Activated CD8-positive, alpha-beta T cell treated with anti-CD3 and anti-CD28 coated beads for 36 hours (primary cell): ENCODE measurements at regions of chr2 and their contacts with region 1.

Region 1: GRCh38 chr2:177263451-177264208 is 897 bp downstream of the NFE2L2 start:
- DNase-seq: peak; percentile 96
- ATAC-seq: peak; percentile 63
- H3K4me3 Mint-ChIP-seq: peak overlapping the region; percentile 90
- H3K27ac Mint-ChIP-seq: peak overlapping the region; percentile 96
- H3K4me1 Mint-ChIP-seq: peaks cover 54% of the 10 kb centered on the region
- H3K27me3 Mint-ChIP-seq: no peaks in the 10 kb centered on the region
- CTCF ChIP-seq: peak; percentile 81

Region 2: GRCh38 chr2:177221534-177221933 is 42.1 kb before region 1 on chr2:
- CTCF ChIA-PET with region 1: interaction called, 12 read pairs
- POLR2A ChIA-PET with region 1: interaction called, 31 read pairs
- intact Hi-C with region 1: loop called (anchors 5 kb)
- DNase-seq: no peak
- ATAC-seq: no peak
- H3K4me3 Mint-ChIP-seq: no peak overlapping the region
- H3K27ac Mint-ChIP-seq: peak overlapping the region; percentile 1
- H3K4me1 Mint-ChIP-seq: peaks cover 40% of the 10 kb centered on the region
- H3K27me3 Mint-ChIP-seq: no peaks in the 10 kb centered on the region
- CTCF ChIP-seq: no peak

Region 3: DNA sequence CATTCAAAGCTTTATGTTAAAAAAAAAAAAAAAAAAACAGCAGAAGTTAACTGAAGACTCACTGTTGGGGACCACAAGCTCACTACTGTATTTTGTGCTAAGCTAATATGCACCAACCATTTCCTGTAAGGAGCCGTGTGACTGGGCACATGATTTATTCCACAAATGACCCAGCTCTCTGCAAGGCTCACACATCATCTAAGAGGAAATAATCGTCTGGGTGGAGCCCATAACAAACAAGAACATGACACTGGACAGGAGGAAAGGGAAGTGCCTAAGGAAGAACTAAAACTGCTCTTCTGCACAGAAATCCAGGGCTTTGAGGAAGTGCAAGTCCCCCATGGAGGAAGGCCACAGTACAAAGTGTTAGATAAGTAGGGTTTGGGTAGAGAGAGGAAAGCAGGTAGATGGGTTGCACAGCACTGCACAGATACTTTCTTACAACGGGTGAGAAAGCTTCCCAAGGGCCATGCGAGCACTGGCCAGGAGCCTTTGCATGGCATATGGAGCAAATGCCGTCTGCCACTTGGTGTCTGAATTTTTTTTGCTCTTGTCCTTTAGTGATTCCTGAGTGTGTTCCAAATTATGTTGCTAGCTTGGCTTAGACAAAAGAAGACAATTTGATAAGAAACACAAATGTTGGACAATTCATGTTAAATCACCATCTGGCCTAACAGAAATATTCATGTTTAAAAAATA is 23.5 kb before region 1 on chr2:
- CTCF ChIA-PET with region 1: interaction called, 33 read pairs
- POLR2A ChIA-PET with region 1: interaction called, 63 read pairs
- intact Hi-C with region 1: no loop called
- DNase-seq: peak; percentile 54
- ATAC-seq: peak; percentile 87
- H3K4me3 Mint-ChIP-seq: no peak overlapping the region
- H3K27ac Mint-ChIP-seq: peak overlapping the region; percentile 87
- H3K4me1 Mint-ChIP-seq: peaks cover 70% of the 10 kb centered on the region
- H3K27me3 Mint-ChIP-seq: no peaks in the 10 kb centered on the region
- CTCF ChIP-seq: no peak

Region 4: DNA sequence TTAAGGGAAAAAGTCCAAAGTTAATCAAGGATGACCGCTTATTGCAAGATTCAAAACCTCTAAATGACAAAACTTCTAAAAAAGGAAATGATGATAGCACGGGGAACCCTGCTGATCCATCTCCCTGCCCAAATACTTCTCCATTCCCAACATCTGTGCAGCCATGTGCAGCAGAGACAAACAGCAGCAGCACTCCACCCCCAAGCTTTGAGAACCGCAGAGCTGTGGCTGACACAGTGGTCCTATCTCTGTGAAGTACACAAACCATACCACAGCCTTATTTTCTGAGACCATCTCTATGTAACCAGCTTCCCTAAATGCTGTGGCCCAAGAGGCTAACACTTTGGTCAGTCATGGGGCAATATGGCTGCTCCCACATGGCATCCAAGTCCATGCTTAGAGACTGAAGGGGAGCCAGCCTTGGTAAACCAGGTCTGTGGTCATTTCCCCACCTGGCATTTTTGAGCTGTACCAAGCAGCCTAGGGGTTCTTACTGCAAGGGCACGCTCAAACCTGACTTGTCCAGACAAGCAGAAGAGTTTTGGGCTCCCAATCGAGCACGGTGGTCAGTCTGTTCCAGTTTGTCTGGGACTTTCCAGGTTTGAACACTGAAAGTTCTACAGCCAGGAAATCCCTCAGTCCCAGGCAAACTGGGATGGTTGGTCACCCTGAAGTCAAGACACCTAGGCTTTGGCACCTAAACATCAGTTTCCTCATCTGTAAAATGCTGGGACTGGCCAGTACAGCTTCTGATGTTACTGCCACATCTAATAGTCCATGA is 18.0 kb after region 1 on chr2:
- CTCF ChIA-PET with region 1: interaction called, 18 read pairs
- POLR2A ChIA-PET with region 1: interaction called, 24 read pairs
- intact Hi-C with region 1: no loop called
- DNase-seq: no peak
- ATAC-seq: no peak
- H3K4me3 Mint-ChIP-seq: no peak overlapping the region
- H3K27ac Mint-ChIP-seq: no peak overlapping the region
- H3K4me1 Mint-ChIP-seq: peaks cover 5% of the 10 kb centered on the region
- H3K27me3 Mint-ChIP-seq: no peaks in the 10 kb centered on the region
- CTCF ChIP-seq: no peak

Region 5: GRCh38 chr2:177296040-177296439 is 32.4 kb after region 1 on chr2:
- CTCF ChIA-PET with region 1: interaction called, 58 read pairs
- POLR2A ChIA-PET with region 1: interaction called, 14 read pairs
- intact Hi-C with region 1: loop called (anchors 2 kb)
- DNase-seq: no peak
- ATAC-seq: peak; percentile 64
- H3K4me3 Mint-ChIP-seq: no peak overlapping the region
- H3K27ac Mint-ChIP-seq: no peak overlapping the region
- H3K4me1 Mint-ChIP-seq: peaks cover 15% of the 10 kb centered on the region
- H3K27me3 Mint-ChIP-seq: no peaks in the 10 kb centered on the region
- CTCF ChIP-seq: no peak

Region 6: DNA sequence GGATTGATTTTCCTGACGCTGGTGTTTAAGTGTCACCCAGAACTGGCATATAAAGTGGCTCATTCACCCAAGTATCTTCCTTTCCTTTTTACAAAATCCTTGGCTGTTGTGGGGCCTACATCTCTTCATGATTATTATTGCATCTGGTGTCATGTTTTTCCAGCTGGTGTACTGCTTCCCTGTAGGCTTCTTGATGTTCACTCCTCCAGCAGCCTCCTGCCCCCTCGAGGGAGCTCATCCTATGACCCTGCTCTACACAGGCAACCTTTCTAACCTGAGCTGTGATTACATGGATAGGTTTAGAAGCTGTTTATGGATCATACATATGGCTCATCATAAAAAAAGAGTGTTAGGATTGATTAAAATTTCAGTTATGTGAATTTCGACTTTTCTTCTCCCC is 116.6 kb after region 1 on chr2:
- CTCF ChIA-PET with region 1: no interaction called
- POLR2A ChIA-PET with region 1: no interaction called
- intact Hi-C with region 1: no loop called
- DNase-seq: no peak
- ATAC-seq: no peak
- H3K4me3 Mint-ChIP-seq: no peak overlapping the region
- H3K27ac Mint-ChIP-seq: no peak overlapping the region
- H3K4me1 Mint-ChIP-seq: no peaks in the 10 kb centered on the region
- H3K27me3 Mint-ChIP-seq: no peaks in the 10 kb centered on the region
- CTCF ChIP-seq: no peak

Region 7: DNA sequence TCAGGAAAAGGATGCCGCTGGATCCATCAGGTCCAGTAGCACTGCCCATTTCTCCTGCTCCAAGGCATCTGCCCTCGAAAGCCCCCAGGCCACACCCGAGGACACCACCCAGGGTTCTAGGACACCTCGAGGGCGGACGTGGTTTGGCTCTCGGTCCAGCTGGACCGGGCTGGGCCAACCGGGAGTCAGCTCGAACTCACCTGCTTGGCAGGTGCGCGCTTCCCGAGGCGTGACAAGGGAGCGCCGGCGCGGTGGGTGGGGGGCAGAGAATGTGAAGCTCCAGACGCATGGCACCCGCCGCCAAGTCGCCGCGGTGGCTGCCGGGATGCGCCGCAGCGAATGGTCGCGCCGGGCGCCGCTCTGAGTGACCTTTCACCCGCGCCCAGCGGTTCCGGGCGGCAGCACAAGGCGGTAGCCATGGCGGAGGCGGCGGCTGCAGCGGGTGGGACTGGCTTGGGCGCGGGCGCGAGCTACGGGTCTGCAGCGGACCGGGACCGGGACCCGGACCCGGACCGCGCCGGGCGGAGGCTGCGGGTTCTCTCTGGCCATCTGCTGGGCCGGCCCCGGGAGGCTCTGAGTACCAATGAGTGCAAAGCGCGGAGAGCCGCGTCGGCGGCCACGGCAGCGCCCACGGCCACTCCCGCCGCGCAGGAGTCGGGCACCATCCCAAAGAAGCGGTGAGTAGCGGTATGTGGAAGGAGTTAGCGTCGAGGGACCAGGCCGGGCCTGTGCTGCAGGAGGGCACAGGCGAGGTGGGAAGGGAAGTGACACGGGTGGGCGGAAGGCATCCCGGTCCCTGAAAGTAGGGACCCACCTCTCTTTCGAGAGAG is 129.0 kb after region 1 on chr2 and contains the start of gene AGPS:
- CTCF ChIA-PET with region 1: no interaction called
- POLR2A ChIA-PET with region 1: interaction called, 20 read pairs
- intact Hi-C with region 1: no loop called
- DNase-seq: peak; percentile 88
- ATAC-seq: peak; percentile 96
- H3K4me3 Mint-ChIP-seq: peak within 1 kb of the TSS; percentile 95
- H3K27ac Mint-ChIP-seq: peak within 1 kb of the TSS; percentile 89
- H3K4me1 Mint-ChIP-seq: peaks cover 51% of the 10 kb centered on the region
- H3K27me3 Mint-ChIP-seq: no peaks in the 10 kb centered on the region
- CTCF ChIP-seq: peak; percentile 43
- total RNA-seq, gene AGPS: 55.7 to 58.9 TPM